ENCODE measurements at regions of chr3 and their contacts with region 1.

Region 1: DNA sequence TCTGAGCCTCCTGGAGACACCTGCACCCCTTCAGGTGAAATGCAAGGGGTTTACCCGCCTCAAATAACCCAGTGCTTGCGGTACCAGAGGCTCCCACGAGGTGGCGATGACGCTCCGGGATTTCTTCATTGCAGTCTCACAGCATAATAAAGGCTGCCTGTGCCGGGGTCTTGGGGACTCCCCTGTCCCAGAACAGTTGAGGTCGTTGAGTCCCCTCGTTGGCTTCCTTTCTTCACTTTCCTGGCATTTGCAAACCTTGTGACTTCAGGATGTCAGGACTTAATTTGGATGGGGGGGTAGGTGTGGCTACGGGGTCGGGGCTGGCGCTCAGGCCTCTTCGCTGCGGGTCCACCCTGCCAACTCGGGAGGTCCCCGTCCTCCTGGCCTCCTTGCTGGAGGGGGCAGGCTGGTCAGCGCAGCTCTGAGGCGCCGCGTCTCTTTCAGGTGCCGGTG is 1.3 kb downstream of the GNAT1 start:
- DNase-seq: peak; percentile 82
- ATAC-seq: peak; percentile 72
- H3K4me3 Mint-ChIP-seq: no peak overlapping the region
- H3K27ac Mint-ChIP-seq: no peak overlapping the region
- H3K4me1 Mint-ChIP-seq: peaks cover 18% of the 10 kb centered on the region
- H3K27me3 Mint-ChIP-seq: peaks cover 11% of the 10 kb centered on the region
- CTCF ChIP-seq: no peak

Region 2: GRCh38 chr3:50044976-50045375 is 147.7 kb before region 1 on chr3:
- CTCF ChIA-PET with region 1: no interaction called
- POLR2A ChIA-PET with region 1: no interaction called
- intact Hi-C with region 1: no loop called
- DNase-seq: no peak
- ATAC-seq: no peak
- H3K4me3 Mint-ChIP-seq: no peak overlapping the region
- H3K27ac Mint-ChIP-seq: no peak overlapping the region
- H3K4me1 Mint-ChIP-seq: no peaks in the 10 kb centered on the region
- H3K27me3 Mint-ChIP-seq: no peaks in the 10 kb centered on the region
- CTCF ChIP-seq: no peak

Region 3: GRCh38 chr3:50121416-50122032 is 71.2 kb before region 1 on chr3:
- CTCF ChIA-PET with region 1: interaction called, 5 read pairs
- POLR2A ChIA-PET with region 1: no interaction called
- intact Hi-C with region 1: loop called (anchors 1 kb)
- DNase-seq: peak; percentile 61
- ATAC-seq: peak; percentile 88
- H3K4me3 Mint-ChIP-seq: no peak overlapping the region
- H3K27ac Mint-ChIP-seq: no peak overlapping the region
- H3K4me1 Mint-ChIP-seq: no peaks in the 10 kb centered on the region
- H3K27me3 Mint-ChIP-seq: no peaks in the 10 kb centered on the region
- CTCF ChIP-seq: peak; percentile 21

Region 4: GRCh38 chr3:50146316-50146901 is 46.3 kb before region 1 on chr3:
- CTCF ChIA-PET with region 1: no interaction called
- POLR2A ChIA-PET with region 1: no interaction called
- intact Hi-C with region 1: no loop called
- DNase-seq: no peak
- ATAC-seq: no peak
- H3K4me3 Mint-ChIP-seq: no peak overlapping the region
- H3K27ac Mint-ChIP-seq: no peak overlapping the region
- H3K4me1 Mint-ChIP-seq: no peaks in the 10 kb centered on the region
- H3K27me3 Mint-ChIP-seq: peaks cover 4% of the 10 kb centered on the region
- CTCF ChIP-seq: no peak

Region 5: GRCh38 chr3:50220109-50220508 is 27.4 kb after region 1 on chr3:
- CTCF ChIA-PET with region 1: interaction called, 100 read pairs
- POLR2A ChIA-PET with region 1: no interaction called
- intact Hi-C with region 1: no loop called
- DNase-seq: no peak
- ATAC-seq: no peak
- H3K4me3 Mint-ChIP-seq: no peak overlapping the region
- H3K27ac Mint-ChIP-seq: no peak overlapping the region
- H3K4me1 Mint-ChIP-seq: no peaks in the 10 kb centered on the region
- H3K27me3 Mint-ChIP-seq: peaks cover 11% of the 10 kb centered on the region
- CTCF ChIP-seq: no peak

Region 6: GRCh38 chr3:50245831-50246516 is 53.3 kb after region 1 on chr3:
- CTCF ChIA-PET with region 1: interaction called, 34 read pairs
- POLR2A ChIA-PET with region 1: interaction called, 7 read pairs
- intact Hi-C with region 1: loop called (anchors 1 kb)
- DNase-seq: peak; percentile 95
- ATAC-seq: peak; percentile 72
- H3K4me3 Mint-ChIP-seq: peak overlapping the region; percentile 75
- H3K27ac Mint-ChIP-seq: peak overlapping the region; percentile 94
- H3K4me1 Mint-ChIP-seq: peaks cover 88% of the 10 kb centered on the region
- H3K27me3 Mint-ChIP-seq: no peaks in the 10 kb centered on the region
- CTCF ChIP-seq: peak; percentile 79

Region 7: DNA sequence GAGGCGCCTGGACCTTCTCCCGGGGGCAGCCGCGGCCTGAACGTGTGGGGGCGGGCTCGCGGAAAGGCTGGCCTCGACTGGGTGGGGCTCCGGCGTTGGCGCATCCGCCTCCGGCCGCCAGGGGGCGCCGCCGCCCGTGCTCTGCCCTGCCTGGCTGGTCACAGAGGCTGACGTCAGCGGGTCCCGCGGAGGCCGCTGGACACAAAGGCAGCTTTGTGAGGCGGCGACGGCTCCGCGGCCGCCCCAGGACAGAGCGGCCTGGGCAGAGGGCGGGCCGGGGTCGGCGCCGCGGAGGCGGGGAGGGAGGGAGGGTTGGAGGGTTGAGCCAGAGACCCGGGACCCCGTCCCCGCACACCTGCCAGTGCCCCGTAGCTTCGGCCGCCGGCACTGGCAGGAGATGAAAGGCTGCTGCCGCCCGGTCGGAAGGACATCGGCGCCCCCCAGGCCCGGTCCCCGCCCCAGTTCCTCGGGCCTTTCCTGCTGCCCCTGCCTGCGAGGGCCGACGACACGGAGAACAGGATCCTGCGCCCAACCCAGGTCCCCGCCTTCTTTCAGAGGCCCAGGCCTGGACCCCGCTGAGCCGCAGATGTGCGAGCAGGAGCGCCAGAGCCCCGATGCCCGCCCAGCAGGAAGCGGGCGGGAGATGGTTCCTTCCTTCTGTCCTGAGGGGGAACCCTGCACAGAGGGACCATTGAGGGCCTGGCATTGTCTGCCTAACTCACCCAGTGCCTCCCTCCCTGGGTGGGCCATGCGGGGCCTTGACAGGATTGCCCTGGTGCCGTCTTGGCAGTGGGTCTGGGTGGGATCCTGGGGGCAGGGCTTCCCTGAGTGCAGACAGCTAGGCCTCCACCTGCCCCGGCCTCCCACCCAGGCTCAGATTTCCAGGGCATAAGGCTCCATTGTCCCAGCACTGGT is 67.6 kb after region 1 on chr3:
- CTCF ChIA-PET with region 1: interaction called, 8 read pairs
- POLR2A ChIA-PET with region 1: no interaction called
- intact Hi-C with region 1: loop called (anchors 1 kb)
- DNase-seq: peak; percentile 91
- ATAC-seq: peak; percentile 93
- H3K4me3 Mint-ChIP-seq: peak overlapping the region; percentile 73
- H3K27ac Mint-ChIP-seq: peak overlapping the region; percentile 50
- H3K4me1 Mint-ChIP-seq: peaks cover 7% of the 10 kb centered on the region
- H3K27me3 Mint-ChIP-seq: no peaks in the 10 kb centered on the region
- CTCF ChIP-seq: no peak

Region 8: GRCh38 chr3:50321336-50322114 is 128.8 kb after region 1 on chr3:
- CTCF ChIA-PET with region 1: interaction called, 4 read pairs
- POLR2A ChIA-PET with region 1: no interaction called
- intact Hi-C with region 1: loop called (anchors 1 kb)
- DNase-seq: peak; percentile 88
- ATAC-seq: peak; percentile 81
- H3K4me3 Mint-ChIP-seq: peak overlapping the region; percentile 88
- H3K27ac Mint-ChIP-seq: peak overlapping the region; percentile 98
- H3K4me1 Mint-ChIP-seq: peaks cover 40% of the 10 kb centered on the region
- H3K27me3 Mint-ChIP-seq: no peaks in the 10 kb centered on the region
- CTCF ChIP-seq: no peak

Measured in activated B cell treated with CpG ODN at 0.5 μM for 24 hours (primary cell).